ENCODE measurements at regions of chrX and their contacts with region 1.

Region 1: GRCh38 chrX:47628980-47629379 is 750 bp downstream of the CFP start:
- DNase-seq: peak; percentile 43
- H3K4me3 ChIP-seq: no peak overlapping the region
- H3K27ac ChIP-seq: no peak overlapping the region
- H3K4me1 ChIP-seq: peaks cover 17% of the 10 kb centered on the region
- CTCF ChIP-seq: peak; percentile 58

Region 2: DNA sequence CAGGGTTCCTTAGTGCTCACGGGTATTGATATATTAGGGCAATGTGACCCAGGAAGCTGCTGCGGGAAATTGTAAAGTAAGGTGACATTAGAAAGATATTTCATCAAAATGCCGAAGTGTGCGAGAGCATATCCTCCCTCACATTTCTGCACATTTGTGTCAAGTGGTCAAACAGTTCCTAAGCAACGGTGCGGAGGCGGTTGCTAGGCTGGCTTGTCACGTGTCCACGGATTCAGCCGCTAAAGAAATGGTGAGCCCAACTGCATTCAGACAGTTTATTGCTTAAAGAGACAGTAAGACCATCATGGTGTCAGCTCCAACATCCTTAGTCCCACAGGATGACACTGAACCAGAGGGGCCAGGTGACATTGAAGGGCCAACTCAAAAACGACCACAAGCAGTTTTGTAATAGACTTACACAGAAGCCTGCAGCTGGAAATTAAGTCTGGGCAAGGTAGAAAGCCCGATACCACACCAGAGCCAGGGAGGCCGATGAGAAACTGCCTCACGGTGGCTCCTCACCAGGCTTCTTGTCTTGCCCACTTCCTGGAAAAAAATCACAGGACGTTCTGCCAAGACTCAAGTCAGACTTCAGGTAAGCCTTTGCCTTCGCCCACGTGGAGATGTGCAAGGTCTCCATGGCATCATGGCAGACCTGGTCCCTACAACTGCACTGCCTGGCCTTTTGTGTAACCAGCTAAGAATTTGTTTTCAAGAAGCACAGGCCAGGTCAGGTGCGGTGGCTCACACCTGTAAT is 345.8 kb before region 1 on chrX:
- CTCF ChIA-PET with region 1: no interaction called
- POLR2A ChIA-PET with region 1: no interaction called
- intact Hi-C with region 1: no loop called
- DNase-seq: no peak
- H3K4me3 ChIP-seq: no peak overlapping the region
- H3K27ac ChIP-seq: no peak overlapping the region
- H3K4me1 ChIP-seq: no peaks in the 10 kb centered on the region
- CTCF ChIP-seq: no peak

Region 3: DNA sequence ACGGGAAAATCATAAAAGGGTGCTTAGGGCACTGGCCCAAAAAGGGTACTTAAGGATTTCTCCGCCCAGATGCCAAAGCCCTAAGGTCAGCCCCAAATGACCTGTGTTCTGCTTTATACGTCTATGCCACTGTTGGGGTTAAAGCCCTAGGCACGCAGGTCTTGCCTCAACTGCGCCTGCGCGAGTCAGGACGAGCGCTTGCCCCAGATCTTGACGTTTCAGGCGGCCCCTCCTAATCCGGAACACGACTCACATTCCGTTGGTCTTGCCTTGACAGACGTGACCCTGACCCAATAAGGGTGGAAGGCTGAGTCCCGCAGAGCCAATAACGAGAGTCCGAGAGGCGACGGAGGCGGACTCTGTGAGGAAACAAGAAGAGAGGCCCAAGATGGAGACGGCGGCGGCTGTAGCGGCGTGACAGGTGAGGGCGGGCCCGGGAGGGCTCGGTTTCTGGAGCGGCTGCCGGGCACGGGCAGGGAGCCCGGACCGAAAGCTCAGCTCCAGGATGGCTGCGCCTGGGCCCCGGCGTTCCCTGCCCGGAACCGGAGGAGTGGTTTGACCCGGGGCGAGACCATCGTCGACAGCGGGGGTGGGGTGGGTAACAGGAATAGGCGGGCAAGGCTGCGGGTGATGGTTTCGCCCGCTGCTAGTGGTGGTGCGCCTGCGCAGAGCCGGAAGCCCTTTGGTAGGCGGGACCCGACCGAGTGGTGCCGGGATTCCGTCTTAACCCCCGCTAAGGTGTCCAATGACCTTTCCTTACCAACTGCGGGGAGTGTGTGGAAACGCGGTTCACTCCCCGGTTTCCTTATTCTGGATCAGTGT is 67.9 kb before region 1 on chrX and contains the start of gene ARAF:
- CTCF ChIA-PET with region 1: no interaction called
- POLR2A ChIA-PET with region 1: no interaction called
- intact Hi-C with region 1: loop called (anchors 5 kb)
- DNase-seq: peak; percentile 98
- H3K4me3 ChIP-seq: peak within 1 kb of the TSS; percentile 86
- H3K27ac ChIP-seq: peak within 1 kb of the TSS; percentile 70
- H3K4me1 ChIP-seq: peaks cover 31% of the 10 kb centered on the region
- CTCF ChIP-seq: no peak
- total RNA-seq, gene ARAF: 13.2 and 28.9 TPM in 2 replicates

Region 4: DNA sequence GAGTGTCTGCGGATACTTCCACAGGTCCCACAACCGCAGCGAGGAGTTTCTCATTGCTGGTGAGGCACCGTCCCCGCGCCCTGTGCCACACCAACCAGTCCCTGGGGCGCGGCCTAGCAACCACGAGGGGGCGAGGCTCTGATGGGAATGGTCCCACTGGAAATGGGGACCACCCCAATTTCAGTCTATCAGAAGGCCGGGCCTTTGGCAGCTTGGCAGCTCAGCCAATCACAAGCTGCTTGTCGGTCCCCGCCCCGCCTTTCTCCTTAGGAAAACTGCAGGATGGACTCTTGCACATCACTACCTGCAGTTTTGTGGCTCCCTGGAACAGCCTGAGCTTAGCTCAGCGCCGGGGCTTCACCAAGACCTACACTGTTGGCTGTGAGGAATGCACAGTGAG is 43.7 kb before region 1 on chrX:
- CTCF ChIA-PET with region 1: interaction called, 3 read pairs
- POLR2A ChIA-PET with region 1: interaction called, 3 read pairs
- intact Hi-C with region 1: loop called (anchors 1 kb)
- DNase-seq: no peak
- H3K4me3 ChIP-seq: no peak overlapping the region
- H3K27ac ChIP-seq: no peak overlapping the region
- H3K4me1 ChIP-seq: no peaks in the 10 kb centered on the region
- CTCF ChIP-seq: no peak

Region 5: DNA sequence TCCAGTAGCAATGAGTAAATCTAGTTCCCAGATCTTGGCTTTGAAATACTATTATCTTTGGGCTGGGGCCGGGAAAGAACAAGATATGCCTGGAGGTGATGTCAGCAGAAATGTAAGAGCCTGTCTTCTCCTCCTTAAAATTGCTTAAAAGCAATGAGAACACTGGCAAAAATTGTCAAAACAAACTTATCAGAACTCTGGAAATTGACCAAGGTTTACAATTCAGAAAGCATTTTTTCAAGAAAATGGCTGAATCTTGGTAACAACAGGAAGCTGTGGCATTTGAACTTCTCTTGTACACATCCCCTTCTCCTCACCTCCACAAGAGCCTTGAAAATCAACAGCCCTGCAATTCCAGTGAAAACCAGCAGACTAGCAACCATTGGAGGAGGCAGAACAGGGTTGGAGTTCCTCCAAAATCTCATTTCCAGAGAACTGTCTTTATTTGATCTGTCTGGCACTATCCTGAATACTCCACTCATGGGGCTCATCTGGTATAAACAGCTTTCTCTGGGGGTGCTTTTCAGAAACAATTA is 33.2 kb before region 1 on chrX:
- CTCF ChIA-PET with region 1: no interaction called
- POLR2A ChIA-PET with region 1: no interaction called
- intact Hi-C with region 1: no loop called
- DNase-seq: no peak
- H3K4me3 ChIP-seq: no peak overlapping the region
- H3K27ac ChIP-seq: no peak overlapping the region
- H3K4me1 ChIP-seq: no peaks in the 10 kb centered on the region
- CTCF ChIP-seq: no peak

Measured in OCI-LY7 (cell line).